ENCODE measurements at regions of chr11 and their contacts with region 1.

Region 1: GRCh38 chr11:92070026-92070889 is 154.4 kb upstream of the FAT3 start:
- DNase-seq: no peak
- H3K4me3 ChIP-seq: no peak overlapping the region
- H3K27ac ChIP-seq: no peak overlapping the region
- H3K4me1 ChIP-seq: no peaks in the 10 kb centered on the region
- H3K27me3 ChIP-seq: no peaks in the 10 kb centered on the region
- CTCF ChIP-seq: peak; percentile 51

Region 2: DNA sequence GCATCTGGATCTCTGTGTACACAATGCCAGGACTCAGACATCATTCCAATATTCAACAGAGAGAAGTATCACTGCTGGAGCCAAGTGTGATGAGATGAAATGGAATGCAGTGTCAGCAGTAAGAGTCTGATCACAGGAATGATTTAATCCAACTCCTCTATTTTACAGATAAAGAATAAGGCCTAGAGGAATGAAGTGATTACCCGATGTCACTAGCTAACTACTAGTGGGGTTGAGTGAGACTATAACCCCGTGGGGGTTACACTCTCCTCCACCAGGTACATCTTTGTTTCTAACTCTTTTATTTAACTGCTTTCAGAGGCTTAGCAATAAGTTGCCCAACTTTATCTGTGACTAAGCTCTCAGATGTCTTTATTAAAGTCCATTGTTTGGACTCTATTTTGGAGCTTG is 60.2 kb after region 1 on chr11:
- CTCF ChIA-PET with region 1: no interaction called
- POLR2A ChIA-PET with region 1: no interaction called
- intact Hi-C with region 1: no loop called
- DNase-seq: no peak
- H3K4me3 ChIP-seq: no peak overlapping the region
- H3K27ac ChIP-seq: no peak overlapping the region
- H3K4me1 ChIP-seq: no peaks in the 10 kb centered on the region
- H3K27me3 ChIP-seq: no peaks in the 10 kb centered on the region
- CTCF ChIP-seq: no peak

Region 3: DNA sequence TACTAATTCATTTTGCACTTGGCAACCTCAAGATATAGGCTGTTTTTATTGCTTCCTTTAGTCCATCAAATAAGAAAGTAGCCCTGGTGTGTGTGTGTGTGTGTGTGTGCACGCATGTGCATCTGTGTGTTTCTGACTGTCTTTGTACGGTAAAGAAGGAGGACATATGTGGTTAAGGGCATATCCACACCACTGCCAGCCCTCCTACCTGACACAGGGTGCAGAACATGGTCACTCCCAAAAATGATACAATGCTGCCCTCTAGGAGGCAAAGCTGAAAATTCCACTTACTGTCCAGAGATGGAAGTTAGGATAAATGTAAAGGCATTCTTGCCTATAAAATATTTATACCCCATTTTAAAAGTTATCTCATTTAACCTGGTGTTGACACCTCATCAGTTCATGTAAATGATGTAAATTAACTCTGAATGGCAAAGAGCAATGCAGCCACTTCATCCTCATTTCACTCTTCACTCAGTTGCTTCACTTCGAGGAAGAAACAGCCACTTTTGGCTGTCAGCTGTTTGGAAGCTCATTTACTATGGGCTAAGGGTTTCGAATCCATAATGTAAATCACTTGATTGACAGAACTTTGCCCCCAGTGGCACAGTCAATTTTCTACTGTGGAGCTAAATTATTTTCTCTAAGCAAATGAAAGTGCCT is 816.1 kb after region 1 on chr11:
- CTCF ChIA-PET with region 1: no interaction called
- POLR2A ChIA-PET with region 1: no interaction called
- intact Hi-C with region 1: loop called (anchors 1 kb)
- DNase-seq: peak; percentile 40 to 43
- H3K4me3 ChIP-seq: no peak overlapping the region
- H3K27ac ChIP-seq: no peak overlapping the region
- H3K4me1 ChIP-seq: no peaks in the 10 kb centered on the region
- H3K27me3 ChIP-seq: no peaks in the 10 kb centered on the region
- CTCF ChIP-seq: peak; percentile 83

Region 4: DNA sequence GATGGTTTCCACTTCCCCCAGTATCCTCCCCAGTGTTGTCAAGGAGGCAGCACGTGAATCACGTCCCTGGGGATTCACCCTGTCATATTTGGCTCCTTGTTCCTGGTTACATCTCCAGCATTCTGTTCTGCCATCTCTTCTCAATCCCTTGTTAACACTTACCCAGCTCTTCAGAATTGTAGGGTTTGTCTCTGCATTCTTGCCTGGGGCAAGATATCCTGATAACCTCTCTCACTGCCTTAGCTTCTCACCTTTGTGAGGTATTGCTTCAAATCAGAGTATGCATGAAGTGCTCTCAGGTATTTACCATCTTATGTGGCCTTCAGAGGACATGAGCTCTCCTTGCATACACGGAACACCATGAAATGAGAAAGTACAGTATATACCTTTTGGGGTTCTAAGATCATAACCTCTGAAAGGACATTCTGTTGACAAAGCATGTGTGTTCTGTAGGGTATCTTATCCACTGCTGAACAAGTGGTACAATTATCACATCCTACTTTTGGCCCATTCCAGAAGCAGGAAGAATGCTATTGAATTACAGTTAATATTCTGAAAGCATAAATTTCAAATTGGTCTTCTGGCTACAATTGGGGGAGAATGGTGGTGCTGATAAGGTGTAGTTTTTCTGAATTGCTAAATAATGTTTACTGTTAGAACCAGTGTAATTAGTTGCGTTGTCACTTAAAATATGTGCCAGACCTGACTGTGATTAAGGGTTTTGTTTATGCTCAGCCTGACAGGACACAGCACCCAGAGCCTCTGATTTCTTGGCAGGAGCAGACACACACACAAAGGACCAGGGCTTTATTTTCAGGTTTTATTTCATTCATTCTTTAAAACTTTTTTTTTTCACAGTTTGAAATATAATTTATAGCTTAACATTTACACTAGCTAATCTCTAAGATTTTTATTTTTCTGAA is 1747.4 kb after region 1 on chr11:
- CTCF ChIA-PET with region 1: no interaction called
- POLR2A ChIA-PET with region 1: interaction called, 10 read pairs
- intact Hi-C with region 1: no loop called
- DNase-seq: peak; percentile 55 to 96
- H3K4me3 ChIP-seq: peak overlapping the region; percentile 5; the same call in 1 of the 2 replicates
- H3K27ac ChIP-seq: peak overlapping the region; percentile 48
- H3K4me1 ChIP-seq: peaks cover 25% of the 10 kb centered on the region
- H3K27me3 ChIP-seq: no peaks in the 10 kb centered on the region
- CTCF ChIP-seq: no peak